Activated B cell treated with CpG ODN at 0.5 μM for 24 hours (primary cell): ENCODE measurements at regions of chr12 and their contacts with region 1.

Region 1: GRCh38 chr12:45170456-45171042 is 45.3 kb upstream of the ANO6 start:
- DNase-seq: peak; percentile 49
- ATAC-seq: no peak
- H3K4me3 Mint-ChIP-seq: no peak overlapping the region
- H3K27ac Mint-ChIP-seq: no peak overlapping the region
- H3K4me1 Mint-ChIP-seq: no peaks in the 10 kb centered on the region
- H3K27me3 Mint-ChIP-seq: no peaks in the 10 kb centered on the region
- CTCF ChIP-seq: peak; percentile 73

Region 2: GRCh38 chr12:45290204-45290580 is 119.6 kb after region 1 on chr12:
- CTCF ChIA-PET with region 1: no interaction called
- POLR2A ChIA-PET with region 1: no interaction called
- intact Hi-C with region 1: no loop called
- DNase-seq: no peak
- ATAC-seq: no peak
- H3K4me3 Mint-ChIP-seq: no peak overlapping the region
- H3K27ac Mint-ChIP-seq: no peak overlapping the region
- H3K4me1 Mint-ChIP-seq: peaks cover 36% of the 10 kb centered on the region
- H3K27me3 Mint-ChIP-seq: no peaks in the 10 kb centered on the region
- CTCF ChIP-seq: no peak

Region 3: GRCh38 chr12:45388545-45388944 is 218.0 kb after region 1 on chr12:
- CTCF ChIA-PET with region 1: interaction called, 28 read pairs
- POLR2A ChIA-PET with region 1: no interaction called
- intact Hi-C with region 1: loop called (anchors 1 kb)
- DNase-seq: no peak
- ATAC-seq: no peak
- H3K4me3 Mint-ChIP-seq: no peak overlapping the region
- H3K27ac Mint-ChIP-seq: no peak overlapping the region
- H3K4me1 Mint-ChIP-seq: no peaks in the 10 kb centered on the region
- H3K27me3 Mint-ChIP-seq: no peaks in the 10 kb centered on the region
- CTCF ChIP-seq: no peak

Region 4: GRCh38 chr12:45433441-45433868 is 262.9 kb after region 1 on chr12:
- CTCF ChIA-PET with region 1: no interaction called
- POLR2A ChIA-PET with region 1: no interaction called
- intact Hi-C with region 1: loop called (anchors 5 kb)
- DNase-seq: no peak
- ATAC-seq: no peak
- H3K4me3 Mint-ChIP-seq: no peak overlapping the region
- H3K27ac Mint-ChIP-seq: no peak overlapping the region
- H3K4me1 Mint-ChIP-seq: no peaks in the 10 kb centered on the region
- H3K27me3 Mint-ChIP-seq: no peaks in the 10 kb centered on the region
- CTCF ChIP-seq: no peak

Region 5: DNA sequence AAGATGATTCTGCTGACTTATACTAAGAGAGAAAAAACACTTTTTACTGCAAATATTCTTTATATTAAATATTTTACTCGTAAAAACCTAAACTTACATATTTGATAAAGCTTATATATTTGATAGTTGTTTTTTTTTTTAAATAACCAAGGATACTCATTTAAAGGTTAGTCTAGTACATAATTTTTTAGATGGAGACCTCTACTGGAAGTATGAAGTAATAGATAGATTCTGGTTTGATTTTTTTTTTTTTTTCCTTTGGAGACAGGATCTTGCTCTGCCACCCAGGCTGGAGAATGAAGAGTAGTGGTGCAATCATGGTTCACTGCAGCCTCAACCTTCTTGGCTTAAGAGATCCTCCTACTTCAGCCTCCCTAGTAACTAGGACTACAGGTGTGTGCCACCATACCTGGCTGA is 575.3 kb after region 1 on chr12:
- CTCF ChIA-PET with region 1: no interaction called
- POLR2A ChIA-PET with region 1: no interaction called
- intact Hi-C with region 1: loop called (anchors 5 kb)
- DNase-seq: no peak
- ATAC-seq: peak; percentile 52
- H3K4me3 Mint-ChIP-seq: no peak overlapping the region
- H3K27ac Mint-ChIP-seq: no peak overlapping the region
- H3K4me1 Mint-ChIP-seq: peaks cover 16% of the 10 kb centered on the region
- H3K27me3 Mint-ChIP-seq: no peaks in the 10 kb centered on the region
- CTCF ChIP-seq: no peak

Region 6: DNA sequence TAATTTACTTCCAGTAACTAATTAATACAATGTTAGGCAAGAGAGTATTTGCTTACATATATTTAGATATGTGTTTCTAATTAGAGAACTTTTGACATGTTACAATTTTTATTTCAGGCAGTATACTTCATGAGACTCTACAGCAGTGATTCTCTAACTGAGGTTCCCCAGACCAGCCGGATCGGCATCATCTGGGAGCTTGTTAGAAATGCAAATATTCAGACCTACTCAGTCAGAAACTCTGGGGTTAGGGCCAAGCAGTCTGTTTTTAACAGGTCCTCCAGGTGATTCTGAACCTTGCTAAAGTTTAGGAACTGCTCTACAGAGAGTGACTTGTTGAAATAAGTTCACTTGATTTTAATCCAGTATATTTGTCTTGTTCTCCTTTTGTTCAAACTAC is 605.4 kb after region 1 on chr12:
- CTCF ChIA-PET with region 1: no interaction called
- POLR2A ChIA-PET with region 1: no interaction called
- intact Hi-C with region 1: no loop called
- DNase-seq: no peak
- ATAC-seq: no peak
- H3K4me3 Mint-ChIP-seq: no peak overlapping the region
- H3K27ac Mint-ChIP-seq: no peak overlapping the region
- H3K4me1 Mint-ChIP-seq: peaks cover 30% of the 10 kb centered on the region
- H3K27me3 Mint-ChIP-seq: no peaks in the 10 kb centered on the region
- CTCF ChIP-seq: no peak